ENCODE measurements at regions of chr1 and their contacts with region 1.

Region 1: DNA sequence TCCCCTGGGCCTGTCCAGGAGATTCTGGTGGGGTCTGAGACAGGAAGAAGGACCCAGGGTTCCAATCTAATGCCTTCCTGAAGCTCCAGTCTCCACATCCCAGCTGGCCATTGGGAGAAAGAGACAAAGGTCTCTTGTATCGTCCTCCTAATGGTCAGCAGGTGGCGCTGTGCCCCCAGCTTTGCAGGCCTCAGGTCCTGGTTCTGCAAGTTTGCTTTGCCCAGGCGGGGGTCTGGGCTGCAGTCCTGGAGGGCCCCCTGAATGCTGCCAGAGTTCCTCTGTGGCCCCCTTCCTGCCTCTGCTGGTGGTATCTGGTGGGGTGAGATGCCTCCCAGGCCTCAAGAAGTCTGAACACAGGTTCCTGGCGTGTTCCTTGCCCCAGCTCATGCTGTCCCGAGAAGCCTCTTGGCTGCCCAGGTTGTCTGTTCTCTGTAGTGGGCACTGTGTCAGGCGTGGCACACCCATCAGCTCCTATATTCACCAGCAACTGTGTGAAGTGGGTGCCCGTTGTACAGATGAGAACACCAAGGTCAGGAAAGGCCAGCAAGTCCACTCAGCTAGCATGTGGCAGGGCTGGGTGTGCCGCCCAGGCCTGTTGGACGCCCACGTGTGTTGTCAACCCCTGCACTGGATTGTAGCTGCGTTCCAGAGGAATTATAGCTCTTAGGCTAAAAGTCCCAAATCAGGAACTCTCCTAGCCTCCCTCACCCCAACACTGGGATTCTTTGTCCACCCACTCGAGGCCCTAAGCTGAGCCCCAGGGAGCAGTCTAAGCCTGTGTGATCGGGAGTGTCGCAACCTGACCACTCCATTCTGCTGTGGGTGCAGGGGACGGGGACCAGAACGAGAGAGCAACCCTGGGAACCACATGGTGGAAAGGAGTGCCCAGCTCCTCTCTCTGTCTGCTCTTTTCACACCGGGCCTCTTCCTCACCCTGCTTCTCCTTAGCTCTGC is 33.9 kb upstream of the CSF3R start:
- DNase-seq: peak; percentile 56
- H3K4me3 Mint-ChIP-seq: no peak overlapping the region
- H3K27ac Mint-ChIP-seq: no peak overlapping the region
- H3K4me1 Mint-ChIP-seq: no peaks in the 10 kb centered on the region
- H3K27me3 Mint-ChIP-seq: no peaks in the 10 kb centered on the region

Region 2: DNA sequence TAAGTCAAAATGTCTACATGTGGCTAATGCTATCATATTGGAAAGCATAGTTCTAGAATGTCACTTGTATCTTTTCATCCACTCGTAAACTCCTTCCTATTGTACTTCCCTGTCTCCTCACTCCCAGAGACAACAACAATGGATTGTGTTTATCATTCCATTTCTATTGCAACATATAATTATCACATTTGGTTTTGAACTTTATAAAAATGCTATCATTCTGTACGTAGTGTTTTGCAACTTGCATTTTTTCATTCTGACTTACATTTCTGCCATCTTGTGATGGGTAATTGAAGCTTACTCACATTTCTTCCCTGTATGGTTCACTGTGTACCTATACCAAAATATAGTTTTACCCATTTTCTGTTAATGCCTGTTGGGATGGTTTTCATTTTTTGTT is 19.4 kb before region 1 on chr1:
- CTCF ChIA-PET with region 1: interaction called, 11 read pairs
- POLR2A ChIA-PET with region 1: no interaction called
- intact Hi-C with region 1: no loop called
- DNase-seq: no peak
- H3K4me3 Mint-ChIP-seq: no peak overlapping the region
- H3K27ac Mint-ChIP-seq: no peak overlapping the region
- H3K4me1 Mint-ChIP-seq: no peaks in the 10 kb centered on the region
- H3K27me3 Mint-ChIP-seq: peaks cover 6% of the 10 kb centered on the region

Region 3: GRCh38 chr1:36528361-36529349 is 12.0 kb after region 1 on chr1:
- CTCF ChIA-PET with region 1: interaction called, 28 read pairs
- POLR2A ChIA-PET with region 1: no interaction called
- intact Hi-C with region 1: no loop called
- DNase-seq: no peak
- H3K4me3 Mint-ChIP-seq: no peak overlapping the region
- H3K27ac Mint-ChIP-seq: no peak overlapping the region
- H3K4me1 Mint-ChIP-seq: peaks cover 14% of the 10 kb centered on the region
- H3K27me3 Mint-ChIP-seq: peaks cover 5% of the 10 kb centered on the region

Region 4: GRCh38 chr1:36553591-36554322 is 37.1 kb after region 1 on chr1:
- CTCF ChIA-PET with region 1: interaction called, 20 read pairs
- POLR2A ChIA-PET with region 1: no interaction called
- intact Hi-C with region 1: no loop called
- DNase-seq: peak; percentile 82
- H3K4me3 Mint-ChIP-seq: no peak overlapping the region
- H3K27ac Mint-ChIP-seq: no peak overlapping the region
- H3K4me1 Mint-ChIP-seq: no peaks in the 10 kb centered on the region
- H3K27me3 Mint-ChIP-seq: peaks cover 30% of the 10 kb centered on the region

Region 5: DNA sequence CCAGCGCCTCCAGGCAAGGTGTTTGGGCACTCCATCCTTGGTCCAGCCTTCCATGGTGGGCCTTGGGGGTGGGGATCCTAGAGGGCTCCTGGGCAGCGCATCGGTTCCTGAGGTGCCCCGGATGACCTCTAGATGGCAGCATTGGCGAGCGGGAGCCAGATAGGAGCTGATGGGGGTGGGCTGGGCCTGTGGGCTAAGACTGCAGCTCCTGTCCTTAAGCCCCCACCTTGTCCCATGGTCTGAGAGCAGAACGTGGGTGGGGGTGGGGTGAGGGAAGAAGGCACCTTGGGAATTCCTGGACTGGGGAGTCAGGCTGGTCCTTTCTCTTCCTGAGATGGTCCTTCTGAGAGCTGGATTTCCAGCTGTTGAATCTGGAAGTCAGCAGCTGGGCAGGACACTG is 59.5 kb after region 1 on chr1:
- CTCF ChIA-PET with region 1: interaction called, 16 read pairs
- POLR2A ChIA-PET with region 1: no interaction called
- intact Hi-C with region 1: no loop called
- DNase-seq: peak; percentile 65
- H3K4me3 Mint-ChIP-seq: no peak overlapping the region
- H3K27ac Mint-ChIP-seq: no peak overlapping the region
- H3K4me1 Mint-ChIP-seq: no peaks in the 10 kb centered on the region
- H3K27me3 Mint-ChIP-seq: peaks cover 24% of the 10 kb centered on the region

Region 6: GRCh38 chr1:36650200-36651065 is 133.8 kb after region 1 on chr1:
- CTCF ChIA-PET with region 1: interaction called, 12 read pairs
- POLR2A ChIA-PET with region 1: no interaction called
- intact Hi-C with region 1: no loop called
- DNase-seq: peak; percentile 79
- H3K4me3 Mint-ChIP-seq: no peak overlapping the region
- H3K27ac Mint-ChIP-seq: no peak overlapping the region
- H3K4me1 Mint-ChIP-seq: no peaks in the 10 kb centered on the region
- H3K27me3 Mint-ChIP-seq: peaks cover 29% of the 10 kb centered on the region

Region 7: DNA sequence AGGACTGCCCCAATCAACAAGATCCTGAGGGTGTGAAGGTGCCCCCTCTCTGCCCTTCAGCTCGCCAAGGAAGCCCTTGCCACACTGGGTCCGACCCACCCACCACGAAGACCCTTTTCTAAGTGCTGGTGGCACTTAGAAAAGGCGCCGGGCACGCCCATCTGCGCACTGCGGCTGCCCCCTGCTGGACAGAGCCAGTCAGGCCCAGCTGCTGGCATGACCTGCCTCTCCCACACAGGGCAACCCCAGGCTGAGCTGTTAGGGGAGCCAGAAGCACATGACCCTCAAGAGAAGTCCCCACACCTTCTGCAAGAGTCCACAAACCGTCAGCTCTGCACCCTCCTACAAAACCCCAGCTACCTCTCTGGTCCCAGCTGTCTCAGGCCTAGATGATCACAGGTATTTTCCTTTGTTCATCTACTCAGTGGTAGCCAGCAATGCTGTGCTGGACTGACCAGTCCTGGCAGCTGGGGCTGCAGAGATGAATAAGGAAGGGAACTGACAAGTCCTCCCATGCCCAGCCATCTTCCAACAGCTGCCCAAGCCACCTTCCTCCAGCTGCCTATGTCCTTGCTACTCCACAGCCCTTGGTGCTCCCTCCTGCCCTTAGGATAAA is 917.8 kb after region 1 on chr1:
- CTCF ChIA-PET with region 1: interaction called, 30 read pairs
- POLR2A ChIA-PET with region 1: no interaction called
- intact Hi-C with region 1: no loop called
- DNase-seq: peak; percentile 79
- H3K4me3 Mint-ChIP-seq: no peak overlapping the region
- H3K27ac Mint-ChIP-seq: no peak overlapping the region
- H3K4me1 Mint-ChIP-seq: no peaks in the 10 kb centered on the region
- H3K27me3 Mint-ChIP-seq: peaks cover 13% of the 10 kb centered on the region